Panc1 (cell line): ENCODE measurements at regions of chr11 and their contacts with region 1.

Region 1: DNA sequence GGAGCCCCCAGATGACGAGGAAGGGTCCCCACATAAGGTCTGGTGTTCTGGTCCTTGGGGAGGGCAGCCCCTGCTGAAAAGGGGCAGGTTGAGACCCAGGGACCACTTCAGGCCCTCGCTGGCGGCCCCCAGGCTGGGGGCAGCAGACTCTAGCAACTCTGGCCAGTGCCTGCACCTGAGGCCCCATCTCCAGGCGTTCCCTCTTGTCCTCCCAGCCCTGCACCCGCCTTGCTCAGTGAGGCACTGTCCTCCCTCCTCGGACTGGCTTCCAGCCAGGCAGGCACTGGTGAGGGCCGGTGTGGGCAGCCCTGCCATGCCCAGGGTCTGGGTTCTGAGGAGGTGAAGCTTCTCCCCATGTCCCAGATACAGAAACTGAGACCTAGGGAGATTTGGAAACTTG is 10.9 kb upstream of the PHLDA2 start:
- DNase-seq: no peak
- ATAC-seq: no peak
- H3K4me3 ChIP-seq: no peak overlapping the region
- H3K27ac ChIP-seq: peak overlapping the region; percentile 59
- H3K4me1 ChIP-seq: peaks cover 18% of the 10 kb centered on the region
- H3K27me3 ChIP-seq: no peaks in the 10 kb centered on the region
- CTCF ChIP-seq: no peak

Region 2: DNA sequence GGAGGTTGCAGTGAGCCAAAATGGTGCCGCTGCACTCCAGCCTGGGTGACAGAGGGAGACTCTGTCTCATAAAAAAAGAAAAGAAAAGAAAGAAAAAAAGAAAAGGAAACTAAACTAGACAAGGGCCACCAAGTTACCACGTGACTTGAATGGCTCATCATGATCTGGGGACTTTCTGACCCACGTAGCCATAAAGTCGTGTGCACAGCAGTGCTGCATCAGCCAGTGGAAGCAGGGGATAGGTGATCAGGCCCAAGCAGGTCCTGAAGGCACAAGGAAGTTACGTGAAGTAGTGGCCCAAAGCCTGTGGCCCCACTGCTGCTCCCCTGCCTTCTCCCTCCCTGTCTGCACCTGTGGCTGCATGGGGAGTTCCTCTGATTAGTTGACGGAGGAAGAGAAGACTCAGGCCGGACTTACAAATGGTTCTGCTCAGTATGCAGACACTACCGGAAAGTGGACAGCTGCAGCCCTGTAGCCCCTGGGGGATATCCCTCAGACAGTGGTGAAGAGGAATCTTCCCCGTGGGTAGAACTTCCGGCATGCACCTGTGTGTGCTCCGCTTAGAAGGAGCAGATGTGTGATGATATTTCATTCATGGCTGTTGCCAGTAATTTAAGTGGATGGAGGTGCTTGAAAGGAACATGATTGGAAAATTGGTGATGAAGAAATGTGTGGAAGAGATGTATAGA is 581.2 kb before region 1 on chr11:
- CTCF ChIA-PET with region 1: no interaction called
- POLR2A ChIA-PET with region 1: no interaction called
- in situ Hi-C with region 1: no loop called
- intact Hi-C with region 1: no loop called
- DNase-seq: no peak
- ATAC-seq: no peak
- H3K4me3 ChIP-seq: no peak overlapping the region
- H3K27ac ChIP-seq: no peak overlapping the region
- H3K4me1 ChIP-seq: no peaks in the 10 kb centered on the region
- H3K27me3 ChIP-seq: no peaks in the 10 kb centered on the region; the same call in 1 of the 2 replicates
- CTCF ChIP-seq: no peak

Region 3: GRCh38 chr11:2951231-2952110 is 11.3 kb after region 1 on chr11:
- CTCF ChIA-PET with region 1: no interaction called
- POLR2A ChIA-PET with region 1: no interaction called
- in situ Hi-C with region 1: no loop called
- intact Hi-C with region 1: no loop called
- DNase-seq: no peak
- ATAC-seq: no peak
- H3K4me3 ChIP-seq: no peak overlapping the region
- H3K27ac ChIP-seq: no peak overlapping the region
- H3K4me1 ChIP-seq: no peaks in the 10 kb centered on the region
- H3K27me3 ChIP-seq: no peaks in the 10 kb centered on the region
- CTCF ChIP-seq: no peak

Region 4: GRCh38 chr11:2963112-2963817 is 23.1 kb after region 1 on chr11:
- CTCF ChIA-PET with region 1: interaction called, 3 read pairs
- POLR2A ChIA-PET with region 1: interaction called, 10 read pairs
- in situ Hi-C with region 1: no loop called
- intact Hi-C with region 1: no loop called
- DNase-seq: no peak
- ATAC-seq: no peak
- H3K4me3 ChIP-seq: no peak overlapping the region
- H3K27ac ChIP-seq: no peak overlapping the region
- H3K4me1 ChIP-seq: no peaks in the 10 kb centered on the region
- H3K27me3 ChIP-seq: no peaks in the 10 kb centered on the region
- CTCF ChIP-seq: no peak